ENCODE measurements at regions of chr14 and their contacts with region 1.

Region 1: DNA sequence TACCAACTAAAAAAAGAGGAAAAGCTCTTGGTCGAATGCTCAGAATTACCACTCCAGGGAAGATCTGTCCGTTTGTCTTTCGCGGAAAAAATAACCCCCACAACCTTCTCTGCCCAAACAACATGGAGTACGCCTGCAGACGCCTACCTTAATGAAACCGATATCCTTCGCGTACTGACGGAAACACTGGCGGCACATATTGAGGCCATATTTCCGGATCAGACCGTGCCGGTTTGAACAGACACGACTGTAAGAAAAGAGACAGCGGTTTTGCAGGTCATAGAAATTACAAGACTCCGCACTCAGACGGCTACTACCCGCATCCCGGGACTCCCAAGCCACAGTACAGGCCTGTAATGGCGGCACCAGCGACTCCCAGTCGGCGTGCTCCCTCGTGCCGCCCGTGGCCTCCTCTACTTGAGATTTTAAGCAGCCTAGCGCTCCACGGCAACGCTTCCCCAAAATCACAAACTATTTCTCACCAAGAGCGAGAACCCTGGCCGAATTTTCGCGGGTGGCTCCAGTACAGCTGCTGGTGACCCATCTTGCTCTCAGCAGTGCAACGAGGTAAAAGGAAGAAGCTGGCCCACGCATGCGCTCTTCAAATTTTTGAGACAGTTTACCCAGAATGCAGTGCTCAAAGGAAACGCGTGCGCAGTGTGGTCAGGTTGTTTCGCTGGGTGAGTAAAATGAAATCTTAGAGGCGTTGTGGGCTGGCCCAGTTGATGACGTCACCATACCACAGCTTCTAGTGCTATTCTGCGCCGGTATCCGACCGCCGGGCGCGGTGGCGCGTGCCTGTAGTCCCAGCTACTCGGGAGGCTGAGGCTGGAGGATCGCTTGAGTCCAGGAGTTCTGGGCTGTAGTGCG is at the start of gene RPS29:
- DNase-seq: peak; percentile 96 to 98 (median 97)
- ATAC-seq: peak; percentile 97 to 98 (median 98)
- H3K4me3 ChIP-seq: peak within 1 kb of the TSS; percentile 72 to 100 (median 90)
- H3K27ac ChIP-seq: peak within 1 kb of the TSS; percentile 77 to 98 (median 93)
- H3K4me1 ChIP-seq: peaks cover 0 to 39% (median 19%) of the 10 kb centered on the region in 12 donors
- H3K27me3 ChIP-seq: no peaks in the 10 kb centered on the region
- CTCF ChIP-seq: no peak
- POLR2A ChIP-seq: peak in 1 of 2 donors; percentile 78
- total RNA-seq, gene RPS29: 507 to 4,598 (median 922) TPM

Region 2: GRCh38 chr14:49598485-49599300 is 12.7 kb after region 1 on chr14 and contains the start of gene LRR1:
- intact Hi-C with region 1: loop called in 1 of 10 experiments (anchors 1 kb)
- DNase-seq: peak; percentile 82 to 93 (median 88)
- ATAC-seq: peak; percentile 86 to 92 (median 90)
- H3K4me3 ChIP-seq: peak within 1 kb of the TSS; percentile 63 to 97 (median 78)
- H3K27ac ChIP-seq: peak within 1 kb of the TSS; percentile 83 to 98 (median 92)
- H3K4me1 ChIP-seq: peaks cover 0 to 42% (median 7%) of the 10 kb centered on the region in 12 donors
- H3K27me3 ChIP-seq: no peaks in the 10 kb centered on the region
- CTCF ChIP-seq: peak in 2 of 12 donors; percentile 23
- POLR2A ChIP-seq: peak in 1 of 2 donors; percentile 29
- total RNA-seq, gene LRR1: 2.5 to 39.6 (median 7.5) TPM

Region 3: GRCh38 chr14:49620182-49621113 is 34.4 kb after region 1 on chr14 and contains the starts of genes MGAT2 and RPL36AL:
- intact Hi-C with region 1: loop called in 3 of 10 experiments (anchors 5 kb)
- DNase-seq: peak; percentile 98 to 99 (median 99)
- ATAC-seq: peak; percentile 99 to 100 (median 100)
- H3K4me3 ChIP-seq: peak within 1 kb of the TSS; percentile 60 to 96 (median 76)
- H3K27ac ChIP-seq: peak within 1 kb of the TSS; percentile 86 to 98 (median 92)
- H3K4me1 ChIP-seq: peaks cover 0 to 57% (median 31%) of the 10 kb centered on the region in 12 donors
- H3K27me3 ChIP-seq: no peaks in the 10 kb centered on the region
- CTCF ChIP-seq: peak in 8 of 12 donors; percentile 17 to 59 (median 32)
- POLR2A ChIP-seq: peak; percentile 64 to 92
- total RNA-seq, gene MGAT2: 12.5 to 28.8 (median 16.4) TPM
- total RNA-seq, gene RPL36AL: 107 to 262 (median 138) TPM